ENCODE measurements at regions of chr6 and their contacts with region 1.

Region 1: DNA sequence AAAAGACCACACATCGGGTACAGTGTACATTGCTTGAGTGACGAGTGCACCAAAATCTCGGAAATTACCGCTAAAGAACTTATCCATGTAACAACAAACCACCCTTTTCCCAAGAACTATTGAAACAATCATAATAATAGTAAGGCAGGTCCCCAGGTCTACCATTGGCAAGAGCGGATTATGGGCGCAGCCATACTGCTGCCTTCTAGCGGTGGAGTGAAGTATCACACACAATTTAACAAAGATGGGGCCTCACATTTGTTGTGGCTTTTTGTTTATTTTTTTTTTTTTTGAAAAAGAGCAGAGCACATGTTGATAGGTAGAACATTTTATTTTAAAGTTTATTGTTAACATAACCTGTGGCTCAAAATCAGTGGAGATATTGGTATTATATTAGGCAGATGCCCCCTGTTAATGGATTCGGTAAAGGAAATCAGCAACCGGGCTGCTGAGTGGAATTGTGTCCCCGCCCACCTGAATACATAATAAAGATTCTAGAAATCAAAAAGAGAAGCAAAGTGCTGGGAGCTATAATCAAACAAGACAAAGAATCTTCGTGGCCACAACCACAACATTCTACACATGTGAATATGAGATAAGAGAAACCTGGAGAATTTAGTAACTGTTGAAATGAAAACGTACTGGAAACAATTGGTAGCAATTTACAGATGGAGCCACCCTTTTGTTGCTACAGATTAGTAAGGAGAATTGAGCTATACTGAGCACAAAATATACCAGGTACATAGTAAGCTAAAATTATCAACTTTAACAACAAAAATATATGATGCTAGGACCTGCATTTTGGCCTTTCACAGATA is 94.2 kb upstream of the EXOC2 start:
- DNase-seq: peak; percentile 28 to 73 (median 50)
- H3K4me3 ChIP-seq: no peak overlapping the region
- H3K27ac ChIP-seq: no peak overlapping the region
- H3K4me1 ChIP-seq: peaks cover 0 to 9% (median 3%) of the 10 kb centered on the region in 4 experiments
- H3K27me3 ChIP-seq: peaks cover 0 to 15% (median 0%) of the 10 kb centered on the region in 5 experiments

Region 2: DNA sequence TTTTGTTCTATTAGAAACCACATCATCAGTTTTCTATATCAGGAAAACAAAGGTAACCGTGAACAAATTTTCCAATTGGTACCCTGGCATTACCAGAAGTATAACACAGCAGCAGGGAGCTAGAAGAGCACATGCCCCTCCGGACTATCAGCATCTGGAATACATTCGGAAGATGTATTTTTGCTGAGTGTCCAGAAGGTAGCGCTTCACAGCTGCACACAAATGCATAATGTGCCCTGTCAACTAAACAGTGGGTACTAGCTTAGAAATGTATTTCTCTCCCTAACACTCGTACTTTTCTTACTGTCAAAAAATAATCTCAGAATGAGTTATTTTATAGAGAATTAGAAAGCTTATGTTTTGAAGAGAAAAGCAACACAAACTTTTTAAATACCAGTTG is 207.8 kb before region 1 on chr6:
- CTCF ChIA-PET with region 1: no interaction called
- POLR2A ChIA-PET with region 1: no interaction called
- DNase-seq: no peak
- H3K4me3 ChIP-seq: no peak overlapping the region
- H3K27ac ChIP-seq: no peak overlapping the region
- H3K4me1 ChIP-seq: no peaks in the 10 kb centered on the region
- H3K27me3 ChIP-seq: no peaks in the 10 kb centered on the region

Region 3: DNA sequence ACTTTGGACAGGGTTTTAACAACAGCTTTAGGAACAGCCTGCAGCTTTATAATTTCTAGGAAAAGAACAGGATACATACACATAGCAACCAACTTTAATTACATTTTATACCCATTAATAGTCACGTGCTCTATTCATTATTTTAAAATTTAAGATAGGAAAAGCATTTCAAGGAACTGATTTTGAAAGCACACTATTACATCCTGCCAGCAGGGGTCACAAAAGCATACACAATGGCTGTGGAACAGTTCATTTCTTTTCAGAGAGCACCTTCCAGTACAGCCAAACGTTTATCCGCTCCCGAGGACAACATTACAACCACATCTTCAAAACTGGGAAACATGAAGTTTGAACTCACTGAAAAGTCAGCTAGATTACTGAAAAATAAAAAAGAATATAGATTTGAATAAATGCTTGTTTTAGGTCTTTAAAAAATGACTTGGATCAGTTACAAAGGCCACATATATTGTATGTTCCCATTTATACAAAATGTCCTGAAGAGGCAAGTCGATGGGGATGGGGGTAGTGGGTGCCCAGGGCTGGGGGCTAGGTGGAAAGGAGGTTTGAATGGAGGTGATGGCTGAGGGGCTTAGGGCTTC is 10.4 kb after region 1 on chr6:
- CTCF ChIA-PET with region 1: interaction called, 16 read pairs
- POLR2A ChIA-PET with region 1: no interaction called
- DNase-seq: peak; percentile 52 to 68 (median 66)
- H3K4me3 ChIP-seq: no peak overlapping the region
- H3K27ac ChIP-seq: no peak overlapping the region
- H3K4me1 ChIP-seq: peaks cover 0 to 13% (median 0%) of the 10 kb centered on the region in 4 experiments
- H3K27me3 ChIP-seq: peaks cover 26 to 51% (median 36%) of the 10 kb centered on the region in 5 experiments

Measured in common myeloid progenitor, CD34-positive (primary cell).